Naive thymus-derived CD8-positive, alpha-beta T cell (primary cell): ENCODE measurements at regions of chr2 and their contacts with region 1.

Region 1: GRCh38 chr2:110874453-110875383 is 142.3 kb downstream of the ACOXL start:
- DNase-seq: no peak
- ATAC-seq: no peak
- H3K4me3 Mint-ChIP-seq: peak overlapping the region in 1 of 10 donors; percentile 43
- H3K27ac Mint-ChIP-seq: peak overlapping the region in 7 of 10 donors; percentile 25 to 90 (median 75)
- H3K4me1 Mint-ChIP-seq: peaks cover 21 to 69% (median 27%) of the 10 kb centered on the region in 4 donors
- H3K27me3 Mint-ChIP-seq: peaks cover 0 to 3% (median 0%) of the 10 kb centered on the region in 5 donors

Region 2: GRCh38 chr2:110853507-110853906 is 21.2 kb before region 1 on chr2:
- POLR2A ChIA-PET with region 1: interaction called, 13 read pairs
- DNase-seq: peak in 8 of 10 donors; percentile 37 to 73 (median 50)
- ATAC-seq: no peak
- H3K4me3 Mint-ChIP-seq: peak overlapping the region in 9 of 10 donors; percentile 2 to 83 (median 67)
- H3K27ac Mint-ChIP-seq: peak overlapping the region; percentile 76 to 95 (median 86)
- H3K4me1 Mint-ChIP-seq: peaks cover 43 to 81% (median 65%) of the 10 kb centered on the region in 4 donors
- H3K27me3 Mint-ChIP-seq: no peaks in the 10 kb centered on the region

Region 3: DNA sequence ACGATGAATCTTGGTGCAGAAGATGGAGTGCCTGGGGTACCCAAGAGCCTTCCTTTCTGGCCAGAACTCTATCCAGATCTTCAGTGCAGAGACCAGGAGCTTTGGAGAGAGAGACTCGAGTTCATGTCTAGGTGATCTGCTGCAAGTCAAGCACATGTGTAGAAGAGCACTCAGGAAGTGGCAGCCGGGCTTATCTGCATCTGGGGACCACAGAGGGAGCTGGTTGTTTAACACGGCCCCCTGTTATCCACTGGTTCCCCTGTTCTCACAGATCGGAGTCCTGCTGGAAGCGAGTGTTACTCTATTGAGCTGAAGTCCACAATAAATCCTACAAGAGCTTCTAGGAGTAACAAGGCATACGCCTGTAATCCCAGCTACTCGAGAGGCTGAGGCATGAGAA is 14.1 kb before region 1 on chr2:
- POLR2A ChIA-PET with region 1: interaction called, 14 read pairs
- DNase-seq: peak in 3 of 10 donors; percentile 37 to 52 (median 41)
- ATAC-seq: peak in 1 of 2 donors; percentile 22
- H3K4me3 Mint-ChIP-seq: peak overlapping the region; percentile 13 to 86 (median 75)
- H3K27ac Mint-ChIP-seq: peak overlapping the region; percentile 90 to 98 (median 96)
- H3K4me1 Mint-ChIP-seq: peaks cover 23 to 57% (median 50%) of the 10 kb centered on the region in 4 donors
- H3K27me3 Mint-ChIP-seq: no peaks in the 10 kb centered on the region